ENCODE measurements at regions of chr7 and their contacts with region 1.

Region 1: DNA sequence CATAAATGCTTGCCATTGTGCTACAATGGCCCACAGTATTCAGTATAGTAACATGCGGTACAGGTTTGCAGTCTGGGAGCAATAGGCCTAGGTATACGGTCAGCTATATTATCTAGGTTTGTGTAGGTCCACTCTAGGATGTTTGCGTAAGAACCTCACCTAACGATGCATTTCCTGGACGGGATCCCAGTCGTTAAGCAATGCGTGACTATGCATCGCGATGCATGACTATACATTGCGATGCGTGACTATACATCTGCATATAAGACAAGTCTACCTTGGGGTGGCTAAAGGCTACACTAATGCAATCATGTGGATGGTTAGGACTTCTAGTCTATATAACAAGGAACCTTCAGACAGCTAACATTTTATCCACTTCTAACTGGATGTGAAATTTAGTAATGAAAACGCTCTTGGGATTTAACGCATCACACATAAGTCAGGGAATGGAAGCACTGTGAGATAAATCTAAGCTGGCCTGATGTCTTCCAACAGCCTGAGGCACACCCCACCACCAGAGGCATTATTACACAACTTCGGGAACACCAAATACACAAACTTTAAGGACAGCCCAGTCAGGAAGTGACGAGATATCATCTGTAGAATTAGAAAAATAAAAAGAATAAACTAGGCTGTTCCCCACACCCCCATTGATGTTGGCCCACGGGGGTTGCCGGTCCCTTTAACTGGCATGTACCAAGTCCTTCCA is 9.2 kb downstream of the GNA12 start:
- DNase-seq: no peak
- H3K4me3 ChIP-seq: no peak overlapping the region
- H3K4me3 Mint-ChIP-seq: no peak overlapping the region
- H3K27ac Mint-ChIP-seq: no peak overlapping the region
- H3K4me1 ChIP-seq: peaks cover 48% of the 10 kb centered on the region
- H3K4me1 Mint-ChIP-seq: peaks cover 54% of the 10 kb centered on the region
- H3K27me3 ChIP-seq: no peaks in the 10 kb centered on the region
- H3K27me3 Mint-ChIP-seq: no peaks in the 10 kb centered on the region
- CTCF ChIP-seq: no peak

Region 2: GRCh38 chr7:2657943-2658671 is 176.8 kb before region 1 on chr7:
- CTCF ChIA-PET with region 1: no interaction called
- POLR2A ChIA-PET with region 1: no interaction called
- intact Hi-C with region 1: no loop called
- DNase-seq: no peak
- H3K4me3 ChIP-seq: no peak overlapping the region
- H3K4me3 Mint-ChIP-seq: no peak overlapping the region
- H3K27ac Mint-ChIP-seq: no peak overlapping the region
- H3K4me1 ChIP-seq: no peaks in the 10 kb centered on the region
- H3K4me1 Mint-ChIP-seq: no peaks in the 10 kb centered on the region
- H3K27me3 ChIP-seq: no peaks in the 10 kb centered on the region
- H3K27me3 Mint-ChIP-seq: no peaks in the 10 kb centered on the region
- CTCF ChIP-seq: no peak

Region 3: DNA sequence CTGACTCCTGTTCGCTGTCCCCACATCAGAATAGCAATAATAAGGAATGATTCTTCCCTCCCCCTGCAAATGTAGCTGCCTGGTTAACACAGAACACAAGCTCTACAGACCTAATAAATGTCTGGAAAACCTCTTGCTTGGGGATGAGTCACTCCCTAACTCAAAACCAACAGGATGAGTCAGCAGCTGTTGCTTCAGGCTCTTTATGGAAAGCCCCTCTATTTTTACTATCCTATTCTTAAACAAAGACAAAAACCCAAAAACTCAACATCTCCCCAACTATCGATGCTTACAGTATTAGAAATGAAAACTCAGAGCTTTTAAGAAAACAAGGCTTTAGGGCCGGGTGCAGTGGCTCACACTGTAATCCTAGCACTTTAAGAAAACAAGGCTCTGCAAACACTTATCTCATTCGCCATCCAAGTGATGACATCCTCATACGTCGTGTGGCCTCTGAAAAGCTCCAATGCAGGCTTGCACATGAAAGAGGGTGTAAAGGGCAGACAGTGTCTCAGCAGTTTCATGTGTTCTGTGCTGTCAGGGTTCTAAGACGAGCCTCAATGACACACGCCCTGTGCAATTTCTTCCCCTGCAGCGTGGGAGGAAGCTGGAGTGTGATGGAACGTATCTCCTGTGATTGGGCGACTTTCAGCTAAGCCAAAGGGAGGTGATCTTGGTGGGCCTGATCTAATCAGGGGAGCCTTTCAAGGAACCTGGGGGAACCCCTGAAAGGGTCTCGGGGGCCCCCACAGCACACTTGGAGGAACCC is 76.8 kb before region 1 on chr7:
- CTCF ChIA-PET with region 1: interaction called, 8 read pairs
- POLR2A ChIA-PET with region 1: no interaction called
- intact Hi-C with region 1: loop called (anchors 5 kb)
- DNase-seq: peak; percentile 76 to 84
- H3K4me3 ChIP-seq: no peak overlapping the region; the same call in 1 of the 2 replicates
- H3K4me3 Mint-ChIP-seq: peak overlapping the region; percentile 67
- H3K27ac Mint-ChIP-seq: peak overlapping the region; percentile 95
- H3K4me1 ChIP-seq: peaks cover 20% of the 10 kb centered on the region
- H3K4me1 Mint-ChIP-seq: peaks cover 31% of the 10 kb centered on the region
- H3K27me3 ChIP-seq: no peaks in the 10 kb centered on the region
- H3K27me3 Mint-ChIP-seq: no peaks in the 10 kb centered on the region
- CTCF ChIP-seq: no peak

Region 4: DNA sequence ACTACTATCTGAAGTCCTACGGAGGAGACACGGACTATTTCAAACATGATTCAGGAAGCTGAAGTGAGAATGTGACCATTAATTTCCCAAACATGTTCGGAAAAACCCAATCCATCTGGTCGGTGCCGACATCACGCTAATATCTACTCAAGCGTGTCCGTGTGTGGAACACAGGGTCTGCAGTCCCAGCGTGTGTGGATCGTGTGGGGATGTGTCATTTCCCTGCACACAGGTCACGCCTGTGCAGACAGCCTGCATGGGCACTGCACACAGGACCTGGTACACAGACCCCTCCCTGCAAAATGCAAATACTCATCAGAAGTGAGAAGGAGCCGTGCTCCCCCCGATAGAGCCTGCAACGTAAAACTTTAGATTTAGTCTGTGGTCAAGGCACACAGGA is 151.0 kb after region 1 on chr7:
- CTCF ChIA-PET with region 1: no interaction called
- POLR2A ChIA-PET with region 1: no interaction called
- intact Hi-C with region 1: no loop called
- DNase-seq: no peak
- H3K4me3 ChIP-seq: no peak overlapping the region
- H3K4me3 Mint-ChIP-seq: no peak overlapping the region
- H3K27ac Mint-ChIP-seq: no peak overlapping the region
- H3K4me1 ChIP-seq: no peaks in the 10 kb centered on the region
- H3K4me1 Mint-ChIP-seq: no peaks in the 10 kb centered on the region
- H3K27me3 ChIP-seq: no peaks in the 10 kb centered on the region
- H3K27me3 Mint-ChIP-seq: peaks cover 7% of the 10 kb centered on the region
- CTCF ChIP-seq: no peak

Region 5: GRCh38 chr7:3321206-3321605 is 486.3 kb after region 1 on chr7:
- CTCF ChIA-PET with region 1: no interaction called
- POLR2A ChIA-PET with region 1: no interaction called
- intact Hi-C with region 1: no loop called
- DNase-seq: peak in 1 of 2 experiments; percentile 19
- H3K4me3 ChIP-seq: no peak overlapping the region
- H3K4me3 Mint-ChIP-seq: peak overlapping the region; percentile 63
- H3K27ac Mint-ChIP-seq: peak overlapping the region; percentile 54
- H3K4me1 ChIP-seq: 0 out of 2 replicates have a peak, but pooled peaks cover 5% of the 10 kb centered on the region
- H3K4me1 Mint-ChIP-seq: peaks cover 7% of the 10 kb centered on the region
- H3K27me3 ChIP-seq: no peaks in the 10 kb centered on the region
- H3K27me3 Mint-ChIP-seq: no peaks in the 10 kb centered on the region
- CTCF ChIP-seq: no peak